GM10248 (cell line): ENCODE measurements at regions of chr1 and their contacts with region 1.

Region 1: GRCh38 chr1:183655562-183656075 is 2.5 kb upstream of the APOBEC4 start:
- DNase-seq: peak; percentile 78
- CTCF ChIP-seq: peak; percentile 69

Region 2: GRCh38 chr1:183551904-183552303 is 103.7 kb before region 1 on chr1:
- CTCF ChIA-PET with region 1: no interaction called
- POLR2A ChIA-PET with region 1: no interaction called
- DNase-seq: no peak
- CTCF ChIP-seq: no peak

Region 3: DNA sequence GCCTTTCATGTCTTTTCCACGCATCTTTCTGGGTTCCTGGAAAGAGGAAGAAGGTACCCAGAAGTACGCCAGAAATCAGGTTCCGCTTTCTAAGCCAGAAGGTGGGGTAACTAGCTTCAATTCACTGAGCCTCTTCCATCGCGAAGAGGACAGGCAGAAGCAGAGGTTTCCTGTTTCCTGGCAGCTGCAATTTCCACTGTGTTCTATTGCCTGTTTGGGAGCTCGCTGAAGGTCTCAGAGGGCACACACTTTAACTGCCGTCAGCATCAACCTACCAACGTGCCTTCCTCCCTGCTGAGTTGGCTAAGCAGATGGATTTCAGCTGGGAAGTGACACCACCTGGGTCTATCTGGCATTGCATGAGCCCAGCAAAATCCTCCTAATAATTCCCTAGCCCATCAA is 75.3 kb before region 1 on chr1:
- CTCF ChIA-PET with region 1: interaction called, 12 read pairs
- POLR2A ChIA-PET with region 1: no interaction called
- DNase-seq: peak; percentile 49
- CTCF ChIP-seq: peak; percentile 27

Region 4: GRCh38 chr1:183670178-183670577 is 14.6 kb after region 1 on chr1:
- CTCF ChIA-PET with region 1: interaction called, 20 read pairs
- POLR2A ChIA-PET with region 1: no interaction called
- DNase-seq: no peak
- CTCF ChIP-seq: no peak

Region 5: DNA sequence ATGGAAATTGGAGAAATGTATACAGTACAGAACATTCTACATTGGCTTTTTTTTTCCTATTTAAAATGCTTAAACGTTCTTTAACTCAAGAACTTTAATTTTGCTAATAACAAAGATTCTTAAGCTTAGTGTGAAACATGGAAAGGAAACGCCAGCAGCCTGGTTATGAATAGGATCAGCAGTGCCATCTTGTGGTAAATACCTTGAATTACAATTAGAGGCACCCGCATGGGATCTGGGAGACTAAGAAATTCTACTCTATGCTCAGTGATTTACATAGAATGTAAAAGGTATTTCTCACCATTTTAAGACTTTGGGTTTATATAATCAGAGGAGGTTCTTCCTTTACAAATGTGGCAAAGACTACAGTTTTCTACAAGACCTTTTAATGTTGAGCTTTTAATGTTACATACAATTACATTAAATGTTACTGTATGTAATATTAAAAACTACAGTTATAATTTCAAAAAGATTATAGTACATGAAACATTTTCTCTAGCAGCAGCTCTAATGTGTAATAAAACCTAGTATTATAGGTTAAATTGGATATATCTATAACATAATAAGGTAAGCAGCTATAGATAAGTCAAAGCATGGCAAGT is 29.6 kb after region 1 on chr1:
- CTCF ChIA-PET with region 1: interaction called, 118 read pairs
- POLR2A ChIA-PET with region 1: no interaction called
- DNase-seq: peak; percentile 64
- CTCF ChIP-seq: peak; percentile 72

Region 6: DNA sequence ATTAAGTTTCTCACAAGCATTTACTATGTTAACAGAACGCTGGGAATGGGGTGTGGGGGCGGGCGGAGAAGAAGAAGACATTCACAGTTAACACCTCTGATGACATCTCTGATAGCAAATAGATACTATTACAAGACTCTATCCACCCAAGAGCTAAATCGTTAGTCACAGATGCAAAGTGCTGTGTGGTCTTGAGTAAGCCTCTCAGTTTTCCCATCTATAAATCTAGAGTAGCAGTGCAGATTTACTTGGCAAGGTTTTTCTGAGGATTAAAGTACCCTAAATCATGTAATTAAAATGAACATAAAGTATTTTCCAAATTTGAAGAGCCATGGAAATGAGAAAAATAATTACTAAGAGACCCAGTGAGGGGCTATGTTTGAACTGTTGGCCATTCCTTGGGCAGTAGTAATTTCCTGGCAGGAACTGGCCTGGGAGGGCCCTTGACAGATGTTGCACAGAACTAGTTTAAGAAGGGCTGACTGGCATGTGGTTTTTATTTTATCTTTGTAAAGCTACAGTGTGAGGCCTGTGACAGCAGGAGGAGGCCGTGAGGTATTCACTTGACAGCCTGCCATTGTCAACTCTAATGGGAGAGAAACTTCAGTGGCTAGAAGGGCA is 56.2 kb after region 1 on chr1:
- CTCF ChIA-PET with region 1: no interaction called
- POLR2A ChIA-PET with region 1: no interaction called
- DNase-seq: no peak
- CTCF ChIP-seq: no peak

Region 7: DNA sequence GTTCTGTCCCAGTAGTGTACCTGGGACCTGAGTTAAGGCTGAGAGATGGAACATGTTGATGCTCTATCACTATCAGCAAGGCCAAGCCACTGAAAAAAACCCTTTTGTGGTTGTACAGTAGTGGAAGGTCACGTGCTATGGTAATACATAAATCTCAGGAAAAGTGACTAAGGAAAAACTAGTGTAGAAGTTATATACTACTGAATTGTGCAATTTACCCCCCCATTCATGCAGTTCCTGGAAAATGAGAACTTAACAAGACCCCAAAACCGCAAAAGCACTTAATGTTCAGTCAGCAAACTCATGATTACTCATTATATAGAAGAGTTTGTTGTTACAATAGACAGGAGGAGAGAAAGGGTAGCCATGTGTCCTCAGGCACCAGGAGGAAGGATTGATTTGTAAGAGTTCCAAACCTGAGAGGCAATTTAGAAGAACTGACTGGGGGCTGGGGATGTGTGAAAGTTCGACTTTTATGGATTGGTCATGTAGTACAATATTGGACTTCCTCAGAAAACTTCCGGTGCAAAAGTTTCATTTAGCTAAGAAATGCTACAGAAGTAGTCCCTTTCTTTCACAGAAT is 240.9 kb after region 1 on chr1:
- CTCF ChIA-PET with region 1: interaction called, 24 read pairs
- POLR2A ChIA-PET with region 1: no interaction called
- DNase-seq: no peak
- CTCF ChIP-seq: no peak